ENCODE measurements at regions of chr2 and their contacts with region 1.

Region 1: DNA sequence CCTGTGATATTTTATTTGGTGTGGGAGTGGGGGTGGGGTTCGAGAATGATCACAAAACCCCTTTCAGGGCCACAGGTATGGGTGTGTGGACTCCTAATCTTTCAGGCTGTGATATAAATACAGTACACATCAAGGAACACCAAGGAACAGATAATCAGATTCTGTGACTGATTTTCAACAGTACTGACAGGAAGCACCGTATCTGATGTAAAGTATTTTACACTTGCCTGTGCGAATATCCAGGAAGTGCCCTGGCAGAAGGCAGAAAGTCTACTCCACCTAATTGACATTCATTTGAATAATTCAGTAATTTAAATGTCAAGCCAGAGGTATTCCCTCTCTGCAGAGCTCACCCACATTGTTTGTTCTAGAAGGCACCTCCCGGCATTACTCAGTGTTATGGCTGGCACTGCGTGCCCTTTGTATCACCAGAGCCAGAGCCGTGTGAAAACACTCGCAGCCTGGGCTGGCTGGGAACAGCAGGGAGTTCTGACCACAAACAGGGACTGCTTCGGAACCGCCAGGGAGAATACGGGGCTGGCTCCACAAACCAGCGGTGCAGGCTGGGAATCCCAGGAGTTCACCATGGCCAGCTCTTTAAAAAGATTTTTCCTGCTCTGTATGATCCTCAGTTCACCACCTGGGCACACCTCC is 91.8 kb downstream of the ACVR1 start:
- DNase-seq: no peak
- H3K4me3 ChIP-seq: no peak overlapping the region
- H3K27ac ChIP-seq: no peak overlapping the region
- H3K4me1 ChIP-seq: peaks cover 0 to 16% of the 10 kb centered on the region in 2 donors
- H3K27me3 ChIP-seq: no peaks in the 10 kb centered on the region
- CTCF ChIP-seq: no peak
- POLR2A ChIP-seq: no peak

Region 2: GRCh38 chr2:157876066-157876787 is 91.9 kb after region 1 on chr2 and contains the start of gene ACVR1:
- intact Hi-C with region 1: loop called (anchors 10 kb)
- DNase-seq: peak; percentile 93 to 98 (median 97)
- H3K4me3 ChIP-seq: peak within 1 kb of the TSS in 3 of 4 donors; percentile 61 to 90 (median 83)
- H3K27ac ChIP-seq: peak within 1 kb of the TSS; percentile 48 to 99 (median 96)
- H3K4me1 ChIP-seq: peaks cover 16 to 23% of the 10 kb centered on the region in 2 donors
- H3K27me3 ChIP-seq: no peaks in the 10 kb centered on the region
- CTCF ChIP-seq: peak in 4 of 6 experiments; percentile 18 to 65 (median 32)
- POLR2A ChIP-seq: peak; percentile 48 to 77
- total RNA-seq, gene ACVR1: 7.4 to 25.0 (median 17.4) TPM